ENCODE measurements at regions of chr17 and their contacts with region 1.

Region 1: DNA sequence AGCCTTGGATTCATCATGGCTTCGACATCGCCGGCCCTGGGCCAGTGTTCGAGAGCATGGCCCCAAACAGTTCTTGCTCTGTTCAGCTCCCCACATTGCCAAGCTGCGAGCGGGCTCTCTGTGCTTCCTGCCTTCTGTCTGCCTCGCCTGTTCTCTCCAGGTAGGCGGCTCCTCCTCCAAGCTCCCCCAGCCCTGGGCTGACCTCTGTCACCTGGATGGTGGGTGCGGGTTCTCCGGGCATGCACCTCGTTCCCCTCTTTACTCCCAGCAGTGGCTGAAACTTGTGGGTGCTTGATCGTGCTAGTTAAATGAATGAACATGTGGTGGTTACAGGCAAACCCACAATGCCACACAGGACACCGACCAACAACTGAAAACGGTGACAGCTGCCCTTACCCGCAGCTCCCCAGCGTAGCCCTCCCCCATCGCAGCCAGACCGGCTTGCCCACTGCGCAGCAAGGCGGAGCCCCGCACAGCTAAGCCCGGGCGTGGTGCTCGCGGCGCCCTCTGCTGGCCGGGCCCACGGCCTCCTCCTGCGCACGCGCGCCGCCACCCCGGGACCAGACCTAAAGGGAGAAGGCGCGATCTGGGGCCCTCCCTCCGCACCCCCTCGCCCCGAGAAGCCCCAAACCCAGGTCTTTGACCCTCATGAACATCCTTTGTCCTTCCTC is 23.0 kb upstream of the EIF1 start:
- DNase-seq: no peak
- ATAC-seq: peak; percentile 90
- H3K4me3 ChIP-seq: peak overlapping the region; percentile 41 to 76
- H3K27ac ChIP-seq: peak overlapping the region; percentile 92
- H3K4me1 ChIP-seq: peaks cover 23% of the 10 kb centered on the region
- H3K27me3 ChIP-seq: no peaks in the 10 kb centered on the region
- CTCF ChIP-seq: peak; percentile 99

Region 2: DNA sequence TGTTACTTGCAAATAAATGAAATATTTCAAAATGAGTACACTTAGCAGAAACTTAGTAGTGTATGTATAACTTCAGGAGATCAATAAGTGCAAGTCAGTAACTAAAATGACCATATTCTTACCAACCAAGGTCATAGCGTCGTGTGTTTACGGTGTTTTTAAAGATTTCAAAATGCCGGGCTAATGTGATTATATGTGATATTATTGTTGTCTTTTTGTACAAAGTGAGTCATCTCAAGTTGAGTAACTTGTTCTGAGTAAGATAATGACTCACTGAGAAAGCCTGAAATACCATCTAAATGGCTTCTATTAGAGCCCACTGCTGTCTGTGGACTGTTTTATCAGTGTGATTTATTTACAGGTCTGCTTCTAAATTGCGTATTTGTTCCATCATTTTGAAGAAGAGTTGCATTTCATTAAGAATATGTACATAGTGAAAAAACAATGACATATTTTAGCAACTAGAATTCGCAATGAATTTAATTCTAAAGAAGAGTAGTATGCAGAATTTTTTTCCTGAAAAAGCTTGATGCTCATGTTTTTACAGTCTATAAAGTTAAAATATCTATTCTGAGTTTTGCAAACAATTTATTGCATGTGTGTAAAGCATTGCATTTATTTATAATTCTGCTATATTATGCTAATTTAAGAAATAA is 811.4 kb before region 1 on chr17:
- CTCF ChIA-PET with region 1: interaction called, 4 read pairs
- POLR2A ChIA-PET with region 1: no interaction called
- in situ Hi-C with region 1: no loop called
- intact Hi-C with region 1: loop called (anchors 2 kb)
- DNase-seq: peak; percentile 50
- ATAC-seq: peak; percentile 85
- H3K4me3 ChIP-seq: no peak overlapping the region
- H3K27ac ChIP-seq: no peak overlapping the region
- H3K4me1 ChIP-seq: peaks cover 5% of the 10 kb centered on the region; the same call in 1 of the 2 replicates
- H3K27me3 ChIP-seq: no peaks in the 10 kb centered on the region
- CTCF ChIP-seq: no peak

Region 3: DNA sequence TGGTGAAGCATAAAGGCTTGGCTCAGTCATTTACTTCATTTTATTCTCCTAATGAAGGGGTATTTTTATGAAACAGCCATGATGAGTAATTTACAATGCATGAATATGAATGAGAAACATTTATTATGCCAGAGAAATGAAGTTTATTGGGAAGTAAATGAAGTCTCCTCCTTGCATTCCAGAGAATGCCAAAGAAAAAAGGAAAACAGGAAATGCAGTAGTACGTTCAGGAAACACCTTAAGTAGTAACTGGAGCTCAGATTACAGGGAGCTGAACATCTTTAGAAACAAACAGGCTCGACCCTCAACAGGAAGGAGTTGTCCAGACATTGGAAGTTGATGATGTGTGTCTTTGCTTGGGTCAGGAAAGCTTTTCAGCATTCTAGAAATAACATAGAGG is 288.2 kb before region 1 on chr17:
- CTCF ChIA-PET with region 1: interaction called, 3 read pairs
- POLR2A ChIA-PET with region 1: no interaction called
- in situ Hi-C with region 1: no loop called
- intact Hi-C with region 1: loop called (anchors 10 kb)
- DNase-seq: no peak
- ATAC-seq: no peak
- H3K4me3 ChIP-seq: no peak overlapping the region
- H3K27ac ChIP-seq: no peak overlapping the region
- H3K4me1 ChIP-seq: no peaks in the 10 kb centered on the region
- H3K27me3 ChIP-seq: no peaks in the 10 kb centered on the region
- CTCF ChIP-seq: no peak

Region 4: DNA sequence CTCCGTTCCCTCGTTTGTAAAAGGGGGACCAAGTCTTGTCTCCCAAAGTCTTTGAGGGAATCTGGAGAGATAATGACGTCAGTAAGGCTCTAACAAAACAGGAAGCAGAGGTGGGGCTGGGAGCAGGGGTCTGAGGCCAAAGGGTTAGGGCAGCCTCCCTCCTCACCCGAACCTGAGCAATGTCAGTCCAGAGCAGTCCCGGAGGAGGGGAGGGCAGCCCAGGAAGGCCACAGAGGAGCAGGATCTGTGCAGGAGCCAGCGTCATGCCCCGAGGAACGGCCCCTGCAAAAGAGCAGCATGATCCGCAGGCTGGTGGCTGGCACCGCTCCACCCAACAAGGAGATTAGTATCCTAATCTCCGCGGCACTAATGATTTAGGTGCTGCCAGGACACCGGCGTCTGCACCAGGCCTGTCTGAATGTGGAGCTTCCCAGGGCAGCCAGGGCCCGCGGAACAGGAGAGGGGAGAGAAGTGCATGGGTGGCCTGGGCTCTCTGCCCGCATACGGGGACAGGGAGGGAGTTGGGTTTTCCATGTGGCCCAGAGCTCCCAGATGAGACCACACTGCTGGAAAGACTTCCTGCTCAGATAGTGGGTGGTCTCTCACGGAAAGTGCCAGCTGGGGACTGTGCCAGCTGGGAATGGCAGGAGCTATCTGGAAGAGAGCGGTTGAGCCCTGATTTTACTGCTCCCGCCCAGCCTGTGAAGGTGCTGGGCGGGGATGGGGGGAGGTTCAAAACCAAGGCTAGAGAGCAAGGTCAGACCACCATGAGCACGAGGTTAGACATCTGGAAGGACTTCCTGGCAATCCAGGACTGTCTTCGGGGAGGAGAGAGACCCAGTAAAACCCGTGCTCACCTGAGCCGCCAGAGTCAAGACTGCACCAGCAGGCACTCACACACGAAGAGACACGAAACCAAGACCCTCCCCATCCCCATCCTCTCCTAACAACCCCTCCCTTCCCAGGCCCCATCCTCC is 30.3 kb before region 1 on chr17:
- CTCF ChIA-PET with region 1: interaction called, 4 read pairs
- POLR2A ChIA-PET with region 1: no interaction called
- in situ Hi-C with region 1: no loop called
- intact Hi-C with region 1: loop called (anchors 1 kb)
- DNase-seq: no peak
- ATAC-seq: peak; percentile 70
- H3K4me3 ChIP-seq: no peak overlapping the region
- H3K27ac ChIP-seq: peak overlapping the region; percentile 40
- H3K4me1 ChIP-seq: peaks cover 12% of the 10 kb centered on the region
- H3K27me3 ChIP-seq: no peaks in the 10 kb centered on the region
- CTCF ChIP-seq: no peak

Region 5: DNA sequence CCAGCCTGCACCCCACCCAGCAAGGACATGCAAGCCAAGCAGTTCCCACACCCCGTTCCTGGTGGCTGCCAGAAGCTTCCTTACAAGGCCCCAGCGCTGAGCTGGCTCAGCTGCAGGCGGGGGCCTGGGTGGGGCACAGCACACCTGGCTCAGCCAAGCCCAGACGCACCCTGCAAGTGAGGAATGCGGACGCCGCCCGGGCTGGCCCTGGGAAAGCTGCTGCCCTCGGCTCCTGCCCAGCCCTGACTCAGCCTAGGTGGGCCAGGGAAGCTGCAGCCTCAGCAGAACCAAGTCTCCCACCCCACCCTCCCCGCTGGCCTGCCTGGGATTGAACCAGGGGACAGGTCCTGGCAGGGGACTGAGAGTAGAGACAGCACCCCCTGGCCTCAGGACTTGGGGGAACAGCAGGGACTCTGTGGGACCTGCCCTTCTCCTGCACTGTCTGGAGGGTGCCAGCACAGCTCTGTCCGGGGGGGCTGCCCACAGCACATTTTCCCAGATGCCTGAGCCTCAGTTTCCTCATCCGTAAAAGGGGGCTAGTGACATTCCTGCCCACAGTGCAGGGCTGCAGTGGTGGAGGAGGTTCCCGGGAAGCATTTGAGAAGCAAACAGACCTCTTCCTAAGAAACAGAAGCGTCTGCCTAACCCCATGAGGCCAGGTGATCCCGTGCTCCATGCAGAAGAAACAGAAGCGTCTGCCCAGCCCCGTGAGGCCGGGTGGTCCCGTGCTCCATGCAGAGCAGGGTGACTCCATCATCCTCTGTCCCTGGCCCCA is 11.4 kb before region 1 on chr17:
- CTCF ChIA-PET with region 1: interaction called, 69 read pairs
- POLR2A ChIA-PET with region 1: no interaction called
- in situ Hi-C with region 1: no loop called
- intact Hi-C with region 1: loop called (anchors 2 kb)
- DNase-seq: no peak
- ATAC-seq: peak; percentile 31
- H3K4me3 ChIP-seq: no peak overlapping the region
- H3K27ac ChIP-seq: no peak overlapping the region
- H3K4me1 ChIP-seq: peaks cover 13% of the 10 kb centered on the region; the same call in 1 of the 2 replicates
- H3K27me3 ChIP-seq: no peaks in the 10 kb centered on the region
- CTCF ChIP-seq: no peak

Region 6: GRCh38 chr17:41724476-41725050 is 58.9 kb after region 1 on chr17:
- CTCF ChIA-PET with region 1: no interaction called
- POLR2A ChIA-PET with region 1: no interaction called
- in situ Hi-C with region 1: no loop called
- intact Hi-C with region 1: no loop called
- DNase-seq: no peak
- ATAC-seq: no peak
- H3K4me3 ChIP-seq: no peak overlapping the region
- H3K27ac ChIP-seq: no peak overlapping the region
- H3K4me1 ChIP-seq: no peaks in the 10 kb centered on the region
- H3K27me3 ChIP-seq: no peaks in the 10 kb centered on the region
- CTCF ChIP-seq: no peak

Measured in Panc1 (cell line).